Breast epithelium (tissue), 4 donors: ENCODE measurements at regions of chr6 and their contacts with region 1.

Region 1: GRCh38 chr6:144667532-144668503 is 382.7 kb downstream of the UTRN start:
- DNase-seq: no peak
- H3K4me3 ChIP-seq: no peak overlapping the region
- H3K27ac ChIP-seq: no peak overlapping the region
- H3K4me1 ChIP-seq: no peaks in the 10 kb centered on the region
- H3K27me3 ChIP-seq: no peaks in the 10 kb centered on the region
- CTCF ChIP-seq: no peak
- POLR2A ChIP-seq: no peak

Region 2: GRCh38 chr6:145626857-145627256 is 959.0 kb after region 1 on chr6:
- intact Hi-C with region 1: loop called (anchors 5 kb)
- DNase-seq: no peak
- H3K4me3 ChIP-seq: no peak overlapping the region
- H3K27ac ChIP-seq: no peak overlapping the region
- H3K4me1 ChIP-seq: no peaks in the 10 kb centered on the region
- H3K27me3 ChIP-seq: no peaks in the 10 kb centered on the region
- CTCF ChIP-seq: no peak
- POLR2A ChIP-seq: no peak